GM10248 (cell line): ENCODE measurements at regions of chr16 and their contacts with region 1.

Region 1: GRCh38 chr16:89308390-89309333 is 91.2 kb downstream of the ZNF778 start:
- DNase-seq: no peak
- CTCF ChIP-seq: no peak

Region 2: DNA sequence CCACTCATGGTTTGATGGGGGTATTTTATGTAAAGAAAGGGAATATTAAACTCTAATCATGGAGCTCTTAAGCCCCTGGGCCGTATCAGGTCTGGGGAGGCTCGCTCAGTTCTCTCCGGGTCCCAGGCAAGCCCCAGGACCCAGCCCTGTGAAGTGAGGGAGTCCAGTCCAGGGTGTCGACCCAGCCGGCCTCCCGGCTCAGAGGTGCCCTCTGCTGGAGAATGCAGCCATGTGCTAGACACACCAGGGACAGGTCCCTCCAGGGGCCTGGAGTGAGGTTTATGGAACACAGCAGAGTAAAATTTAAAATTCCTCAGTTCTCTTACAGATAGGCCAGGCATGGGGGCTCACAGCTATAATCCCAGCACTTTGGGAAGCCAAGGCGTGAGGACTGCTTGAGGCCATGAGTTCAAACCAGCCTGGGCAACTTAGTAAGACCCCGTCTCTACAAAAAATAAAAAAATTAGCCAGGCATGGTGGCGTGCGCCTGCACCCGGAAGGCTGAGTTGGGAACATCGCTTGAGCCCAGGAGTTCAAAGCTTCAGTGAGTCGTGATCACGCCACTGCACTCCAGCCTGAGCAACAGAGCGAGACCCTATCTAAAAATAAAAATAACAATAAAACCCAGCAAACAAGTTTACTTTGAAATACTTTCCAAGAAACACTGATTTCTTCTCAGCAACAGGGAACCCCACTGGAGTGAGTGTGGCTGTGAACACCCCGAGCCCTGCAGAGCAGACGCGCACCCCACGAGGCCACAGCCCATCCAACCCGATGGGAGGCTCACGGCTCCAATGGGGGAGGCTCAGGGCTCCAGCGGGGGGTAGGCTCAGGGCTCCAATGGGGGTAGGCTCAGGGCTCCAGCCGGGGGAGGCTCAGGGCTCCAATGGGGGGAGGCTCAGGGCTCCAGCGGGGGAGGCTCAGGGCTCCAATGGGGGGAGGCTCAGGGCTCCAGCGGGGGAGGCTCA is 18.9 kb before region 1 on chr16:
- CTCF ChIA-PET with region 1: interaction called, 12 read pairs
- POLR2A ChIA-PET with region 1: no interaction called
- DNase-seq: peak; percentile 91
- CTCF ChIP-seq: peak; percentile 76